ENCODE measurements at regions of chr12 and their contacts with region 1.

Region 1: DNA sequence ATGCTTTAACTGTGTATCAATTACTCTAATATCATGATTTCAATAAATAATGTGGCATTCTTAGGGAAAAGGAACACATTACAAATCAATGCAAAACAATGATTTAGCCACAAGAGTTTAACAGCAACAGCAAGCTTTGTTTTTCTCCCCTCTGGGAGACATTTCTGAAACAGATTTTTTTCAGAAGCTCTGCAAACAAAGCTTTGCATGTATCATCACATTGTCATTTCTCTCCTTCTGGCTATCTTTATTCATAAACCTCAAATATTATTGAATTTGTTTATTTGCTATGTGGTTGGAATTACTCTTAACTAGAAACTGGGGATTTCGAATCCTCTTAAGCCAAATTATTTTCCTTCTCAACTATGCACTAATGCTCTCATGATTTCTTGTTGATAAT is 278.4 kb upstream of the ATXN7L3B start:
- DNase-seq: no peak
- ATAC-seq: no peak
- H3K4me3 Mint-ChIP-seq: no peak overlapping the region
- H3K27ac Mint-ChIP-seq: no peak overlapping the region
- H3K4me1 Mint-ChIP-seq: no peaks in the 10 kb centered on the region
- H3K27me3 Mint-ChIP-seq: no peaks in the 10 kb centered on the region
- CTCF ChIP-seq: no peak

Region 2: DNA sequence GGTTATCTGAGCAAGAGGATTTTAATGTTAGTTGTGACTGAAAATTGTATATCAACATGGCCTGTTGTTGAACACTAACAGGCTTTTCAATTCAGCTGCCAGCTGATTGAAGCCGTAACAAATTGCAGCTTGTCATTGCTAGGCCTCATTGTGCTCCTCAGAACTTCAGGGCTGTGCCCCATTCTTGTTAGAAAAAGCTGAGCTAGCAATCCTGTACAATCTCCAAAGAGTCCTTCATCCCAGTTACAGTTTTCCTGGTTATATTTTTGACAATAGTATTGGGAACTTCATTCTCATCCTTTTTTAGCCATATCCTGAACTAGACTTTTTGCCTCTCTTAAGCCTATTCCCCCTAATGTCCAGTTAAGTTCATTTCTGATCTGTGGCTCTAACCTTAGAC is 285.7 kb before region 1 on chr12:
- CTCF ChIA-PET with region 1: no interaction called
- POLR2A ChIA-PET with region 1: no interaction called
- intact Hi-C with region 1: no loop called
- DNase-seq: no peak
- ATAC-seq: no peak
- H3K4me3 Mint-ChIP-seq: no peak overlapping the region
- H3K27ac Mint-ChIP-seq: no peak overlapping the region
- H3K4me1 Mint-ChIP-seq: no peaks in the 10 kb centered on the region
- H3K27me3 Mint-ChIP-seq: no peaks in the 10 kb centered on the region
- CTCF ChIP-seq: no peak

Region 3: DNA sequence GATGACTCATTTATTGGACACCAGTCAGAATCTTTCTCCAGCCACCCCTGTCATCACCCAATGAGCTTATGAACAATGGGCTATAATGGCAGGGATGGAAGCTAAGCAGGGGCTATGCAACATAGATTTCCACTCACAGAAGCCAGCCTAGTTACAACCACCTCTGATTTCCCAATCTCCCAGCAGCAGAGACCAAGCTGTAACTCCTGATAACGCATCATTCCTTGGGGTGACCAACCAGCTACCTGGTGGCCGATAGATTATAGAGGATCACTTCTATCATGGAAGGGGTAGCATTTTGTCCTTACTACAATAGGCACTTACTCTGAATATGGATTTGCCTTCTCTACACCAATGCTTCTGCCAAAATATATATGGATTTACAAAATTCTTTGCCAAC is 23.9 kb before region 1 on chr12:
- CTCF ChIA-PET with region 1: no interaction called
- POLR2A ChIA-PET with region 1: no interaction called
- intact Hi-C with region 1: loop called (anchors 2 kb)
- DNase-seq: no peak
- ATAC-seq: no peak
- H3K4me3 Mint-ChIP-seq: no peak overlapping the region
- H3K27ac Mint-ChIP-seq: no peak overlapping the region
- H3K4me1 Mint-ChIP-seq: no peaks in the 10 kb centered on the region
- H3K27me3 Mint-ChIP-seq: no peaks in the 10 kb centered on the region
- CTCF ChIP-seq: no peak